GM10248 (cell line): ENCODE measurements at regions of chr17 and their contacts with region 1.

Region 1: DNA sequence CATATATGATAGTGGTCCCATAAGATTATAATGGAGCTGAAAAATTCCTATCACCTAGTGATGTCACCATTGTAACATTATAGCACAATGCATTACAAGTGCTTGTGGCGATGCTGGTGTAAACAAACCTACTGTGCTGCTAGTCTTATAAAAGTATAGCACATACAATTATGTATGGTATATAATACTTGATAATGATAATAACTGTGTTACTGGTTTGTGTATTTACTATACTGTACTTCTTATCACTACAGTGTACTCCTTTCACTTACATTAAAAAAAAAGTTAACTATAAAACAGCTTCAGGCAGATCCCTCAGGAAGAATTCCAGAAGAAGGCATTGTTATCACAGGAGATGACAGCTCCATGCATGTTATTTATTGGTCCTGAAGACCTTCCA is 122.0 kb upstream of the NACA2 start:
- DNase-seq: no peak
- CTCF ChIP-seq: no peak

Region 2: GRCh38 chr17:61611673-61612022 is 101.4 kb before region 1 on chr17:
- CTCF ChIA-PET with region 1: no interaction called
- POLR2A ChIA-PET with region 1: no interaction called
- DNase-seq: no peak
- CTCF ChIP-seq: no peak

Region 3: GRCh38 chr17:61689610-61690180 is 23.3 kb before region 1 on chr17:
- CTCF ChIA-PET with region 1: no interaction called
- POLR2A ChIA-PET with region 1: no interaction called
- DNase-seq: no peak
- CTCF ChIP-seq: no peak

Region 4: GRCh38 chr17:61729689-61730268 is 16.7 kb after region 1 on chr17:
- CTCF ChIA-PET with region 1: interaction called, 11 read pairs
- POLR2A ChIA-PET with region 1: no interaction called
- DNase-seq: no peak
- CTCF ChIP-seq: no peak